ENCODE measurements at regions of chr2 and their contacts with region 1.

Region 1: DNA sequence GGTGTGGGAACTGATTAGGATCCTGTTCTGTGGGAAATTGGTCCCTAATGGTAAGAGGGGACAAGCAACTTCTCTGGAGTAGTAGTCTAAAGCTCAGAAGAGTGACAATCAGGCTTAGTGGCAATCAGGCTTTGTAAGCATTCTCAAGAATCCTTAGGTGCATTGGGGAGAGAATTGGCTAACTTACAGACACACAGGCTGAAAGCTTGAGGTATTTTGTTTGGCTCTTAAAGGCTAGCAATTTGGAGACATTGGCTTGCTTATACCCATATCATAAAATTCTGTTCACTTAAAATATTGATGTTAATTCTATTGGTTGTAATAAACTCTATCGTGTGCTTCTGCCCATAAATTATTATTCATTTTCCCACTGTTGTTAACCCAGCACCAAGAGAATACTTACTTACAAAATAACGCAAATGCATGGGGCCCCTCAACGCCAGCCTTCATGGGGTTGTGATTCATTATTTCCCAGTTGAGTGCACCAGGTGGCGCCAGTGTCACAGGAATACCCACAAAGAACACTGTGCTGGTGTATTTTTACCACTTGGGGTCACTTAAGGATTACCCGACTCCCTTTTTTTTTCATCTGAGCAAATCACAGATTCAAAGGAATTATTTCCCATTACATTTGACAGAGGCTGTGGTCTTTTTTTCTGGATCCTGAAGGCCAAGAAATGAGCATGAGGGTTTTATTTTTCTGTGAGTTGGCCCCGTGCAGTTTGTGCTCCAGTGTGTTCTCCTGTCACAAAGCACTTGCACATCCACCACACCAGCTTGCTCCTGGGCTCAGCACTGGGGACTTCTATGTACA is 45.5 kb downstream of the DDX1 start:
- DNase-seq: peak; percentile 70
- H3K4me3 Mint-ChIP-seq: no peak overlapping the region
- H3K27ac Mint-ChIP-seq: no peak overlapping the region
- H3K4me1 Mint-ChIP-seq: peaks cover 6% of the 10 kb centered on the region
- H3K27me3 Mint-ChIP-seq: no peaks in the 10 kb centered on the region
- CTCF ChIP-seq: peak; percentile 86

Region 2: DNA sequence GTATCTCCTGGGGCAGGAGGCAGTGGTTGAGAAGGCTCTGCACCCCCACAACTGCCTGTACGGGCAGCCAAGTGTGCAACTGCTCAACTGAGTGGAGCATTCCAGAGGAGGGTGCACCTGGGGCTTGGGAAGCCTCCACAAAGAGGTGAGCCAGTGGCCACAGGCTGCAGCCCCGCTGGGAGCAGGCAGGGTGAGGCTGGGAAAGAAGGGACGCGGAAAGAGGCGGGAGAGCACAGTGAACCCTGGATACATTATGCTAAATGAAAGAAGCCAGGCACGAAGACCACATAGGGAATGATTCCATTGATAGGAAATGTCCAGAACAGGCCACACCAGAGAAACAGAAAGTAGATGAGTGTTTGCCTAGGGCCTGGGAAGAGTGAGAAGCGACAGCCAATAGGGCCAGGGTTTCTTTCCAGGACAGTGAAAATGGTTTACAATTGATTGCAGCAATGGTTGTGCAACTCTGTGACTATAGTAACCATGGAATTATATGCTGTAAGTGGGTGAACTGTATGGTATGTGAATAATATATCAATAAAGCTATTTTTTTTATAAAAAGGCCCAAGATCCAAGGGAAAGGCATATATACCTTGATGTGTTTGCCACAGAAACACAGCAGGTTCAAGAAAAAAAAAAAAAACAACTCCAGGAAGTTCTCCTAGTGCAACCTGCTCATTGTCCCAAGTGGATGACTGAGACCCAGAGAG is 36.9 kb after region 1 on chr2:
- CTCF ChIA-PET with region 1: no interaction called
- POLR2A ChIA-PET with region 1: no interaction called
- intact Hi-C with region 1: loop called (anchors 1 kb)
- DNase-seq: peak; percentile 81
- H3K4me3 Mint-ChIP-seq: no peak overlapping the region
- H3K27ac Mint-ChIP-seq: peak overlapping the region; percentile 39
- H3K4me1 Mint-ChIP-seq: peaks cover 21% of the 10 kb centered on the region
- H3K27me3 Mint-ChIP-seq: no peaks in the 10 kb centered on the region
- CTCF ChIP-seq: no peak

Region 3: DNA sequence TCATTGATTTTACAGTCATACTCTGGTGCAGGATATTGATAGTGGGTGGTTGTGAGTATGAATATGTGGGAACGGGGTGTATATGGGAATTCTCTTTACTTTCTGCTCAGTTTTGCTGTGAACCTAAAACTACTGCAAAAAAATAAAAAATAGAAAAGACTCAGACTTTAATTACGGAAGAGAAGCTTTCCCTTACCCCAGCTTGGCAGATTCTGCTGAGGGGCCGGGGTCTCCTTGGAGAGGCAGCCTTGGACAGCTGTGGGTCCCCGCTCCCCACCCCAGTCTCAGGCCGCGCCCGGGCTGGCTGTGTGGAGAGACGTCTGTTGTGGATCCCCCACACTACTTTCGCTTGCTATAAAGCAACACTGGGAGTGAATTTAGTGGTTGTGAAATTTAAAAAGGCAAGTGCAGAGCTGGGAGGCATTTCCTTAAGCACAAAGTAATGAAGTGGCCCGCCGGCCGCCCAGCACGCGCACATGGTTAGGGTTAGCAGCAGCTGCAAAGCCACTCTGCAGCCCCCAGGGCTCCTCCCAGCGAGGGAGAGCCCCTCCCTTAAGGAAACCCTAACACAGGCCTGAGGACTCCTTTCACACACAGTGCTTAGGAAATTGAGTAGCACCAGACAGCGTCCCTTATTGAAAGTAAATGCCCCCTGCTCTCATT is 56.9 kb after region 1 on chr2:
- CTCF ChIA-PET with region 1: no interaction called
- POLR2A ChIA-PET with region 1: no interaction called
- intact Hi-C with region 1: no loop called
- DNase-seq: no peak
- H3K4me3 Mint-ChIP-seq: no peak overlapping the region
- H3K27ac Mint-ChIP-seq: no peak overlapping the region
- H3K4me1 Mint-ChIP-seq: no peaks in the 10 kb centered on the region
- H3K27me3 Mint-ChIP-seq: peaks cover 10% of the 10 kb centered on the region
- CTCF ChIP-seq: no peak

Region 4: GRCh38 chr2:15748736-15749323 is 111.7 kb after region 1 on chr2:
- CTCF ChIA-PET with region 1: no interaction called
- POLR2A ChIA-PET with region 1: no interaction called
- intact Hi-C with region 1: loop called (anchors 1 kb)
- DNase-seq: peak; percentile 59
- H3K4me3 Mint-ChIP-seq: no peak overlapping the region
- H3K27ac Mint-ChIP-seq: no peak overlapping the region
- H3K4me1 Mint-ChIP-seq: no peaks in the 10 kb centered on the region
- H3K27me3 Mint-ChIP-seq: peaks cover 47% of the 10 kb centered on the region
- CTCF ChIP-seq: no peak

Region 5: GRCh38 chr2:15860760-15861159 is 223.6 kb after region 1 on chr2:
- CTCF ChIA-PET with region 1: no interaction called
- POLR2A ChIA-PET with region 1: no interaction called
- intact Hi-C with region 1: no loop called
- DNase-seq: peak; percentile 14
- H3K4me3 Mint-ChIP-seq: no peak overlapping the region
- H3K27ac Mint-ChIP-seq: no peak overlapping the region
- H3K4me1 Mint-ChIP-seq: no peaks in the 10 kb centered on the region
- H3K27me3 Mint-ChIP-seq: peaks cover 83% of the 10 kb centered on the region
- CTCF ChIP-seq: peak; percentile 9

Region 6: DNA sequence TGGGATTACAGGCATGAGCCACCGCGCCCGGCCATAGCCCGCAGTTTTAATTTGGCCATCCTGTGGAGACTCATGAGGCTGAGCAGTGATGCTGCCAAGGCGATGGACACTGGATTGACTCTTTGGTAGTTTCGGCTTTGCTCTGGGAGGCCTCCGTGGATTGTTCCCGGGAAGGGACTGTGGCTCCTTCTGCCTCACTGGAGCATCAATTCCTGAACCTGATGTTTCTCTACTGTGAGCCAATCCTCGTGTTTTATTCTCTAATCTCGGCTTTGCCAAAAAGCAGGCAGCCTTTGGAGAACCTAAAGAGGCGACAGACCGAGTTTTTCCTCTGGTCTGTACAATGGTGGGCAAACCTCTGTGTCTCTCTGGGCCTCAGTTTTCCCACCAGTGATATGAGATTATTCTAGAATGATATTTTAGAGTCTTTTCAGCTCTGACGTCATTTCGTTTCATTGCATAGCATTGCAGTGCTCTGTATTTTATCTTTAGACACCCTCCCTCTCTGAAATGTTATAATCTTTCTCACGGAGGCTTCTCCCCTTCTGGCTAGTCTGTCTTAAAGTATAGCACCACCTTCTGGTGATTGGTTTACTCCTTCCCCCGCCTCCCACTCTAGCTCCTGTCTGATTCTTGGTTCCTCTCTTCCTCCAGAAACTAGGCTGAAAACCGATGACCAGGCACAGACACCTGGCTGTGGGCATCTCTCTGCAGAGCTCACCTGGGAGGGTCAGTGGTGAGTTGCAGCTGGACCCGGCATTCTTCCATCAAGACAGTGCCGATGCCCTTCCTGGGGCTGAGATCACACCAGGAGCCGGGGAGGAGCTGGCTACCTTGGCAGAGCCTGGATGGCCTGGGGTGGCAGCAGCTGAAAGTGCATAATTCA is 644.5 kb after region 1 on chr2:
- CTCF ChIA-PET with region 1: interaction called, 4 read pairs
- POLR2A ChIA-PET with region 1: no interaction called
- intact Hi-C with region 1: loop called (anchors 5 kb)
- DNase-seq: peak; percentile 39
- H3K4me3 Mint-ChIP-seq: no peak overlapping the region
- H3K27ac Mint-ChIP-seq: no peak overlapping the region
- H3K4me1 Mint-ChIP-seq: no peaks in the 10 kb centered on the region
- H3K27me3 Mint-ChIP-seq: no peaks in the 10 kb centered on the region
- CTCF ChIP-seq: peak; percentile 24

Region 7: GRCh38 chr2:16507655-16508489 is 870.7 kb after region 1 on chr2:
- CTCF ChIA-PET with region 1: interaction called, 12 read pairs
- POLR2A ChIA-PET with region 1: no interaction called
- intact Hi-C with region 1: loop called (anchors 5 kb)
- DNase-seq: no peak
- H3K4me3 Mint-ChIP-seq: no peak overlapping the region
- H3K27ac Mint-ChIP-seq: no peak overlapping the region
- H3K4me1 Mint-ChIP-seq: no peaks in the 10 kb centered on the region
- H3K27me3 Mint-ChIP-seq: no peaks in the 10 kb centered on the region
- CTCF ChIP-seq: peak; percentile 56